Activated CD4-positive, alpha-beta memory T cell treated with anti-CD3 and anti-CD28 coated beads for 36 hours (primary cell): ENCODE measurements at regions of chr1 and their contacts with region 1.

Region 1: DNA sequence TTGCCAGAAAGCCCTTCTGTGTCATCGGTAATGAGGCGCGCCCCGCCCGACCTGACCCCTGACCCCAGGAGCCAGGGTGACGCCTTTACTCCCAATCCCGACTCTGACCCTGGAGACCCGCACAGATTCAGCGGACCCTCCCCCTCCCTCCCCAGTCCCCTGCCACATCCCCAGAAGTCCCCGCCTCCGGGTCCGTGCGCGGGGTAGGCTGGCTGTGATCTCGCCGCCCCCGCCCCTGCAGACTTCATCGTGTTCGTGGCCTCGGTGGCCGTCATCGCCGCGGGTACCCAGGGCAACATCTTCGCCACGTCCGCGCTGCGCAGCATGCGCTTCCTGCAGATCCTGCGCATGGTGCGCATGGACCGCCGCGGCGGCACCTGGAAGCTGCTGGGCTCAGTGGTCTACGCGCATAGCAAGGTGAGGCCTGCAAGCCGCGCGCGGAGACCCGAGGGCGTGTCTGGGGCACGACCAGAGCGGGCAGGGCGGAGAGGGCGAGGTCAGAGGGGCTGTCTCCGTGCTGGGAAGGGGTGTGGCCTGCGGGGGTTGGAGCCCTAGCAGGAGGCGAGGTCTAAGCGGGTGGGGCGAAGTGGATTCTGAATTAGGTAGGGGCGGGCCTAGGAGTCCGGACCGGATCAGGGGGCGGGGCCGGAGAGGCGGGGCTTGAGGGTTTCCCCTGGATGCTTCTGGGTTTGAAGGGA is 34.8 kb downstream of the KCNQ4 start:
- DNase-seq: peak; percentile 93
- H3K4me3 Mint-ChIP-seq: peak overlapping the region; percentile 74
- H3K27ac Mint-ChIP-seq: peak overlapping the region; percentile 33
- H3K4me1 Mint-ChIP-seq: peaks cover 14% of the 10 kb centered on the region
- H3K27me3 Mint-ChIP-seq: no peaks in the 10 kb centered on the region

Region 2: DNA sequence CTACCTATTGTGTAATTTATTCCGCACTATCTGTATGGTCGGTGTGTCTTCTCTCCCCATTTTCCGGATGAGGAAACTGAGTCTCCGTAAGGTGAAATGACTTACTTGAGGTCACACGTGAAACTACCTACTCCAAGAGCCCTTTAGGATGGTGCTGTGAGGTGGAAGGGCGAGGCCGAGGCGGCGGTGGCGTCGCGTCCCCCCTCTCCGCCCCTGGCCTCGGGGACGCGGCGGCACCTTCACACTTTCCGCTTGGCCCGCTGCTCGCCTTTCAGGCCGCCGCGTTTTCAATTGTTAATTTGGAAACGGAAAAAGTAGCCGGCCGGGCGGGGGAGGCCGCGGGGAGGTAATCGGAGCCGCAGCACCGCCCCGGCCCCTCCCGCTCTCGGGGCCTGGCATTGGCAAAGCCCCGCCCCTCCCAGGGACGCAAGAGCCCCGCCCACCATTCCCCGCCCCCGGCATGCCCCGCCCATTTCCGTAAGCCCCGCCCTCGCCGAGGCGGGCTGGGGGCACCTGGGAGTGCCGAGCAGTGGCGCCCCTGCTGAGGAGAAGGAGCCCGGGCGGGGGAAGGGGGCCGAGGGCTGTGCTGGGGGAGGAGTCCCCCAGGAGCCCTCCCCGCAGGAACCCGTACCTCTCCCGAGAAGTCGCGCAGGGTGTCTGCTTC is 16.2 kb before region 1 on chr1:
- CTCF ChIA-PET with region 1: no interaction called
- POLR2A ChIA-PET with region 1: interaction called, 8 read pairs
- intact Hi-C with region 1: loop called (anchors 1 kb)
- DNase-seq: peak; percentile 92
- H3K4me3 Mint-ChIP-seq: peak overlapping the region; percentile 29
- H3K27ac Mint-ChIP-seq: peak overlapping the region; percentile 33
- H3K4me1 Mint-ChIP-seq: peaks cover 20% of the 10 kb centered on the region
- H3K27me3 Mint-ChIP-seq: no peaks in the 10 kb centered on the region